Mammary epithelial cell (primary cell): ENCODE measurements at regions of chr15 and their contacts with region 1.

Region 1: DNA sequence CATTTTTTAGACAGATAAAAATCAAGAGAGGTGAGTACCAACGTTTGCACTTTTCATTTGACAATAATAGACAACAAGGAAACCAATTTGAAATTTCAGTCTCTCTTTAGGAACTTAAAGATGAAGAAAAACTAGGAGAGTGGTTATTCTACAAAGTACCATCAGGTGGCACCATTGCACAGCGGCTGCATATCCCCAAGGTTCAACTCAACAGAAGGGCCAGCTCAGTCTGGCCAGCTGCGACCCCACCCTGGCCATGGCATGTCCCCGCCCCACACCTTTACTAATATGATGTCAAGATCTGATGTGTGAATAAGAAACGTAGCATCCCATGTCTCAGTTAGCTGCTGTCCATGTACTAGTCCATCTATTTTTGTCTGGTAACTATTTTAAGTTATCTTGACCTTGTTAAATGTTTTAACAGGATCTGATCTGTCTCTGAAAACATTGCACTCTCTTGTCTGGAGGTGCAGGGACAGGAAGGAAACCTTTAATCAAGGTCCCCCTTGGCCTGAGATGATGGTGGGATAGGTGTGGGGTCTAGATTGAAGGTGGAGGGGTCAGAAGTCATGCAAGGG is 35.5 kb upstream of the CGNL1 start:
- DNase-seq: peak; percentile 27
- H3K4me3 ChIP-seq: no peak overlapping the region
- H3K27ac ChIP-seq: no peak overlapping the region
- H3K4me1 ChIP-seq: no peaks in the 10 kb centered on the region
- H3K27me3 ChIP-seq: no peaks in the 10 kb centered on the region
- CTCF ChIP-seq: peak; percentile 68 to 86

Region 2: DNA sequence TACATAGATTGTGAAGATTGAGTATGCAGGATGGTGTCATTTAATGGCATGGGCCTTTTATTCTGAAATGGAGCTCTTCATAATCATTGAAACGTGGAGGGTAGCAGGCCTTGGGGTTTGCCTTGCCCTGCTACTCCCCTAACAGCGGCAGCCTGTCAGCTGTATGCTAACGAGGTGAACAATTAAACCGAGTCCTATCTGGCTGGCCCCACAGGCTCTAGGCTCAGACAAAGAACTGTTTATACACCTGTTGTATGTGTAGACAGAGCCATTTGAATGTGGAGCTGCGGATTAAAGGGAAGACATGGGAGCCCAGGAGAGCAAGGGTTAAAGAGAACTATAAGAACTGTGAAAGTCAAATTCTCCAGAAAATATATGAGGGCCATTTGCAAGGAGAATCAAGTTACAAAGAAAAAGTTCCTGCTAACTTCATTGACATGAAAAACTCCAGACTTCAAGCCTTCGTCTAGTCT is 81.2 kb before region 1 on chr15:
- CTCF ChIA-PET with region 1: no interaction called
- dilution Hi-C with region 1: loop called (anchors 5 kb)
- in situ Hi-C with region 1: no loop called
- intact Hi-C with region 1: no loop called
- DNase-seq: no peak
- H3K4me3 ChIP-seq: no peak overlapping the region
- H3K27ac ChIP-seq: no peak overlapping the region
- H3K4me1 ChIP-seq: no peaks in the 10 kb centered on the region
- H3K27me3 ChIP-seq: no peaks in the 10 kb centered on the region
- CTCF ChIP-seq: no peak

Region 3: GRCh38 chr15:57306161-57306943 is 34.4 kb before region 1 on chr15:
- CTCF ChIA-PET with region 1: no interaction called
- dilution Hi-C with region 1: no loop called
- in situ Hi-C with region 1: no loop called
- intact Hi-C with region 1: no loop called
- DNase-seq: peak; percentile 42
- H3K4me3 ChIP-seq: peak overlapping the region; percentile 39 to 53 (median 46)
- H3K27ac ChIP-seq: no peak overlapping the region
- H3K4me1 ChIP-seq: peaks cover 12% of the 10 kb centered on the region
- H3K27me3 ChIP-seq: no peaks in the 10 kb centered on the region
- CTCF ChIP-seq: peak; percentile 55 to 91

Region 4: GRCh38 chr15:57382215-57382614 is 41.4 kb after region 1 on chr15:
- CTCF ChIA-PET with region 1: no interaction called
- dilution Hi-C with region 1: loop called (anchors 5 kb)
- in situ Hi-C with region 1: no loop called
- intact Hi-C with region 1: no loop called
- DNase-seq: no peak
- H3K4me3 ChIP-seq: no peak overlapping the region
- H3K27ac ChIP-seq: no peak overlapping the region
- H3K4me1 ChIP-seq: no peaks in the 10 kb centered on the region
- H3K27me3 ChIP-seq: peaks cover 2% of the 10 kb centered on the region
- CTCF ChIP-seq: no peak

Region 5: DNA sequence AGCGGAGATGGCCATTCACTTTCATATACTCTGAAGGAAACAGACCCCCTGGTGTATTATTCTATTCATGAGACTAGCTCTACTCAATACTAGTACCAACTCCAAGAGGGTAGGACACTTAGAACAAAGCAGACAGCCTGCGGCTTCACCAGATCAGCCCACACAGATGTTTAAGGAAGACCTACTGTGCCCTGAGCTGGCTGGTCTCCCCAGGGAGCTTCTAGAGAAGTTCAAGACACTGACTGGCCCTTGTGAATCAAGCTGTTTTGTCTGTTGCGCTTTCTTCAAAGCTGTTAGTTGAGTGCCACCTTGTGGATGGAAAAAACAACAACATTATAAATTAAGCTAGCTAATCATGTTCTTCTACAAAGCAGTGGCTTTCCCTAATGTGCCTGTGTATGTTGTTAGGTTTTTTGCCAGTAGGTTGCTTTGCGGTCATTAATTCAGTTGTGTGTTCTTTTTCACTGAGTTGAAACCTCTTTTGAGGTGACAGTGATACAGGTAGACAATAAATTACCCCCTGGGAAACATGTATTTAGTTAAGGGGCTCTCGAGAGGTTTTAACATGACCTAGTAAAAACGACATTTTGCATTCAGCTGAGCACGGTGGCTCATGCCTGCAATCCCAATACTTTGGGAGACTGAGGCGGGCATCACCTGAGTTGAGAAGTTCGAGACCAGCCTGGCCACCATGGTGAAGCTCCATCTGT is 186.8 kb after region 1 on chr15:
- CTCF ChIA-PET with region 1: interaction called, 23 read pairs
- dilution Hi-C with region 1: no loop called
- in situ Hi-C with region 1: loop called (anchors 5 kb)
- intact Hi-C with region 1: loop called (anchors 1 kb)
- DNase-seq: peak; percentile 68
- H3K4me3 ChIP-seq: no peak overlapping the region
- H3K27ac ChIP-seq: no peak overlapping the region
- H3K4me1 ChIP-seq: no peaks in the 10 kb centered on the region
- H3K27me3 ChIP-seq: no peaks in the 10 kb centered on the region
- CTCF ChIP-seq: peak; percentile 46 to 63

Region 6: DNA sequence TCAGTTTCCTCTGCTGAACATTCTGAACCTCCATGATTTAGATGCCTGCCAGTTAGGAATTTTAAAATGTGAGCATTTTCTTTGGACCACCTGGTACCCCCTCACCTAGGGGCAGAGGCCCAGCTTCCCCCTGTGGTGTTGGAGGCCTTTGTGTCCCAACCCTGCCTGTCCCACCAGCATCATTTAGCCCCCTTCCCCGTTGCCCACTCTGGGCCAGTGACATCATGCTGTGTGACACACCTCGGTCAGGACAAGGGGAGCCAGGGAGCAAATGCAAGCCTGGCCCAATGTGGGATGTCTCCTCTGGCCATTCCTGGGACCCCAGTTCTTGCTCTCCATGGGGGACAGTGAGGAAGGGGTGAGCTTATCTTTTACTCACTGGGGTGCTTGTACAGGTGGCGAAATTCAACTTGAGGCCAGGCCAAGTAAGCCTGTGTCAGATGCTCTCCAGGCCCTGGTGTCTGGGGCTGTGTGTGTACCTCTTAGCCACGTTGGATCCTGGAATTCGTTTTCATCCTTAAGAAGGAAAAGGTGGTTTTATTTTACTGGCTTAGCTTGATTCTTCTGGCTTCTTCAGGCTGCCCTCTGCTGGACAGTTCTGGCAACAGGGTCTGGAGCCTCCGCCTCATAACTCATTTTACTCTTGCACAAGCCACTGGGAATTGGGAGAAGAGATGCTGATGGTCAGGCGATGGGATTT is 201.2 kb after region 1 on chr15:
- CTCF ChIA-PET with region 1: interaction called, 3 read pairs
- dilution Hi-C with region 1: loop called (anchors 5 kb)
- in situ Hi-C with region 1: no loop called
- intact Hi-C with region 1: loop called (anchors 1 kb)
- DNase-seq: peak; percentile 53
- H3K4me3 ChIP-seq: no peak overlapping the region
- H3K27ac ChIP-seq: no peak overlapping the region
- H3K4me1 ChIP-seq: peaks cover 5% of the 10 kb centered on the region
- H3K27me3 ChIP-seq: no peaks in the 10 kb centered on the region
- CTCF ChIP-seq: peak; percentile 93 to 97

Region 7: DNA sequence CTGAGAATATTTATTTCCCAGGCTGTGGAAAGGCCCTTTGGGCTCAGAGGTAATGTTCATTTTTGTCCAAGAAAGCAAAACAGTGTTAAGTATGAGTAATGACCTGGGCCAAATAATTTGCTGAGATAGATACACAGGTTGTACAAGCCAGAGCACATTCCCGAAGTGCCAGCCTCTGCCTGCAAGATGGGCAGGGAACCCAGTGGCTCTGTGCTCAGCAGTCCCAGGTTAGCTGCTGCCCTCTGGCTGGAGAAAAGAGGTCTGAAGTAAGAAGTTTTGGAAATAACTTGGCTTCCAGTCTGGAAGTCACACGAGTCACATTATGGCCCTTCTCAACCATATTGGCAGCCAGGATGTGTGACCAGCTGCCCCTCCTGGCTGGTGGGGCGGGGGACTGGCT is 271.2 kb after region 1 on chr15:
- CTCF ChIA-PET with region 1: no interaction called
- dilution Hi-C with region 1: no loop called
- in situ Hi-C with region 1: no loop called
- intact Hi-C with region 1: loop called (anchors 1 kb)
- DNase-seq: peak; percentile 89
- H3K4me3 ChIP-seq: no peak overlapping the region
- H3K27ac ChIP-seq: peak overlapping the region; percentile 61
- H3K4me1 ChIP-seq: peaks cover 23% of the 10 kb centered on the region
- H3K27me3 ChIP-seq: no peaks in the 10 kb centered on the region
- CTCF ChIP-seq: peak; percentile 51 to 88